H1 (cell line): ENCODE measurements at regions of chr13 and their contacts with region 1.

Region 1: DNA sequence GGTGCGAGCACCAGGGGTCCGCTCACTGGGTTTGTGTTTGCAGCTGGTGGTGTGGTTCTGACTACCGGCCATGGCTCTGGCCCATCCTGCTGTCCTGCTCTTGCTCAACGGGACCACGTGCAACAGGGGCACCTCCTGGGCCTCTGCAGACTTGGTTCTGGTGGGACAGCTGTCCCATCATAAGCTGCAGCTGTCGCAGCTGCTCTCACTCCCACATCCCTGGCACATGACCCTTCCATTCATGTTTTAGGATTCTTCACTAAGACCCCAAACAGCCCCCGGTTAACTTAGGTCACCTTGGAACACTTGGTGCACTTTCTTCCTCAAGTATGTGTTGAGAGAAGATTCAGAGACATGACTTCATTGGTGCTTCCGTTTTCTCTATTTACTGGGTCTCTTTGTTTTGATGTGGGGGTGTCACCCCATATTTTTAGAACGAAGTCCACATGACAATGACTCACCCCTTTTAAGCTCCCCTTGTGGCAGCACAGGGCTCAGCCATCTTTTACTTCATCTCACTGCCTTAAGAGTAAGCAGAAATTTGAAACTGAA is 68.4 kb upstream of the ARHGEF7 start:
- DNase-seq: no peak
- H3K4me3 ChIP-seq: no peak overlapping the region
- H3K27ac ChIP-seq: no peak overlapping the region
- H3K4me1 ChIP-seq: no peaks in the 10 kb centered on the region
- H3K27me3 ChIP-seq: no peaks in the 10 kb centered on the region; a peak in 1 of 7 replicates
- CTCF ChIP-seq: no peak
- EP300 ChIP-seq: no peak
- POLR2A ChIP-seq: no peak
- RAD21 ChIP-seq: no peak

Region 2: DNA sequence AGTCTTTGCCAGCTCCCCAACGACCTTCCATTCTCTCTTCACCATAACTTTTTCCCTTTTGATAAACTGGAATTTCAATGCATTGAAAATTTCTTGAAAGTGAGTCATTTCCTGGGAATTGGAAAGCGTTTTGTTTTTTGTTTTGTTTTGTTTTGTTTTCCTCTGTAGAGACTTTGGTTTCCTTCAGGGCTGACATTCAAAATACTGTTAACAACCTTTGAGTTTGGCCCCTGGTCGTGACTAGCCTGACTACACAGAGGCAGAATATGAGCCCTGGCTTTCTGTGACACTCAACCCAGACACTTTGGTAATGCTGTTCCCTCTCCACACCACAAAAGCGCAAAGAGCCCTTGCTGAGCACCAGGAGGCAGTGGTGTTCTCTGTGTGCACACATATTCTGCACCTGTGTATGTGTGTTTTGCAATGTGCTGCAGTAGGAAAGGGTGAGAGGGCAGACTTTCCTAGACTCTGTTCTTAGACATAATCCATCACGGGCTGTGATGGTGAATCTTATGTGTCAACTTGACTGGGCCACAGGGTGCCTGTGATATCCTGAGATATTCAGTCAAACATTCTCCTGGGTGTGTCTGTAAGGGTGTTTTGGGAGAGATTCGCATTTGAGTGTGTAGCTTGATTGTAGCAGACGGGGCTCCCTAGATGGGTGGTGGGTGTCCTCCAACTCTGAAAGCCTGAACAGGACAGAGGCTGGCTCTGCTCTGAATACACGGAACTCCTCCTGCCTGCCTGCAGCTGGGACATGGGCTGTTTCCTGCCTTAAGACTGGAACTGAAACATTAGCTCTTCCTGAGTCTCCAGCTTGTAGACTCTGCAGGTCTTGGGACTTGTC is 102.3 kb before region 1 on chr13:
- CTCF ChIA-PET with region 1: interaction called, 33 read pairs
- POLR2A ChIA-PET with region 1: no interaction called
- DNase-seq: no peak
- H3K4me3 ChIP-seq: no peak overlapping the region
- H3K27ac ChIP-seq: no peak overlapping the region
- H3K4me1 ChIP-seq: peaks cover 0 to 2% (median 0%) of the 10 kb centered on the region in 4 experiments; a peak in 1 of 7 replicates
- H3K27me3 ChIP-seq: no peaks in the 10 kb centered on the region
- CTCF ChIP-seq: peak; percentile 70 to 85 (median 82)
- EP300 ChIP-seq: no peak
- POLR2A ChIP-seq: no peak
- RAD21 ChIP-seq: peak; percentile 90 to 92

Region 3: GRCh38 chr13:111031531-111031961 is 15.1 kb before region 1 on chr13:
- CTCF ChIA-PET with region 1: interaction called, 10 read pairs
- POLR2A ChIA-PET with region 1: no interaction called
- DNase-seq: peak in 1 of 2 experiments; percentile 30
- H3K4me3 ChIP-seq: no peak overlapping the region
- H3K27ac ChIP-seq: no peak overlapping the region
- H3K4me1 ChIP-seq: no peaks in the 10 kb centered on the region
- H3K27me3 ChIP-seq: no peaks in the 10 kb centered on the region
- CTCF ChIP-seq: no peak
- EP300 ChIP-seq: no peak
- POLR2A ChIP-seq: no peak
- RAD21 ChIP-seq: no peak